A673 (cell line): ENCODE measurements at regions of chr2 and their contacts with region 1.

Region 1: GRCh38 chr2:49222975-49223528 is 68.7 kb upstream of the FSHR start:
- DNase-seq: no peak
- H3K4me3 ChIP-seq: no peak overlapping the region
- H3K27ac ChIP-seq: no peak overlapping the region
- H3K4me1 ChIP-seq: no peaks in the 10 kb centered on the region
- H3K27me3 ChIP-seq: no peaks in the 10 kb centered on the region
- CTCF ChIP-seq: no peak

Region 2: DNA sequence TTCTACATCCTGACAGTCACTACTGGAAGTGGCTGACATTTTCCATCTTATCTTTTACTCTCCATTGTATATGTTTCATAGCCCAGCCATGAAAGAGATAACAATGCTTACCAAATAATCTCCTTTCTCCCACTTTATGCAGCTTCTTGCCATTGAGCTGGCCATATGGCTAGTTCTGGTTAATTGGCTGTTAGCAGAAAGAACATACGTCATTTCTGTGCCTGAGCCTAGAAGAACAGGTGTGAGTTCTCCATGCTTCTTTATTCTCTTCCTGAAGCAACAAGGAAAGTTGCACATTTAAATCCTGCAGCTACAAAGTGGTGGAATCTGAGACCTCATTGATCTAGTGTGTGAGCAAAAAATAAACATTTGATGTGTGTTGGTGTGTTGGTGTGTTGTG is 13.3 kb after region 1 on chr2:
- CTCF ChIA-PET with region 1: no interaction called
- POLR2A ChIA-PET with region 1: interaction called, 20 read pairs
- intact Hi-C with region 1: no loop called
- DNase-seq: no peak
- H3K4me3 ChIP-seq: no peak overlapping the region
- H3K27ac ChIP-seq: no peak overlapping the region
- H3K4me1 ChIP-seq: no peaks in the 10 kb centered on the region
- H3K27me3 ChIP-seq: no peaks in the 10 kb centered on the region
- CTCF ChIP-seq: no peak

Region 3: GRCh38 chr2:49261781-49262180 is 38.7 kb after region 1 on chr2:
- CTCF ChIA-PET with region 1: no interaction called
- POLR2A ChIA-PET with region 1: no interaction called
- intact Hi-C with region 1: no loop called
- DNase-seq: no peak
- H3K4me3 ChIP-seq: no peak overlapping the region
- H3K27ac ChIP-seq: no peak overlapping the region
- H3K4me1 ChIP-seq: no peaks in the 10 kb centered on the region
- H3K27me3 ChIP-seq: no peaks in the 10 kb centered on the region
- CTCF ChIP-seq: no peak